ENCODE measurements at regions of chr1 and their contacts with region 1.

Region 1: GRCh38 chr1:2650967-2651645 is 18.3 kb upstream of the MMEL1 start:
- DNase-seq: peak in 2 of 7 donors; percentile 10 to 14
- H3K4me3 ChIP-seq: no peak overlapping the region
- H3K27ac ChIP-seq: no peak overlapping the region
- H3K4me1 ChIP-seq: no peaks in the 10 kb centered on the region
- H3K27me3 ChIP-seq: no peaks in the 10 kb centered on the region
- CTCF ChIP-seq: no peak
- POLR2A ChIP-seq: no peak

Region 2: DNA sequence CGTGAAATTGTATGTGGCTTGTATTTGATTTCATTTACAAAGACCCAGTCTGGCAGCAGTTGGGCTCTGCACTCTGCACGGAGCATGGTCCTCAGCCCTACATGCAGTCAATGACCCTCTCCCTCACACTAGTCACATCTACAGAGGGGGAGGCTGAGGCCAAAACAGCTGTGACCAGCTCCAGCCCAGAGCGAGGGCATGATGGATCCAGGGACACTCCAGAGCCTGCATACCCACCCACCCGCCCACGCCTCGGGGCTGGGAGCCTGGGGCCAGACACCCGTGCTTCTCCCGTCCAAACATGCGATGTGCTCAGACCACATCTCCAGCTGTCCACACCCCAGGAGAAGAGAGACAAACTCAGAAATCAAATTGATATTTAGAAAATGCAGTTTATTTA is 403.9 kb after region 1 on chr1:
- intact Hi-C with region 1: loop called in 1 of 2 experiments (anchors 5 kb)
- DNase-seq: no peak
- H3K4me3 ChIP-seq: no peak overlapping the region
- H3K27ac ChIP-seq: no peak overlapping the region
- H3K4me1 ChIP-seq: no peaks in the 10 kb centered on the region
- H3K27me3 ChIP-seq: peaks cover 21% of the 10 kb centered on the region
- CTCF ChIP-seq: no peak
- POLR2A ChIP-seq: no peak